Endothelial cell of umbilical vein (primary cell): ENCODE measurements at regions of chr5 and their contacts with region 1.

Region 1: DNA sequence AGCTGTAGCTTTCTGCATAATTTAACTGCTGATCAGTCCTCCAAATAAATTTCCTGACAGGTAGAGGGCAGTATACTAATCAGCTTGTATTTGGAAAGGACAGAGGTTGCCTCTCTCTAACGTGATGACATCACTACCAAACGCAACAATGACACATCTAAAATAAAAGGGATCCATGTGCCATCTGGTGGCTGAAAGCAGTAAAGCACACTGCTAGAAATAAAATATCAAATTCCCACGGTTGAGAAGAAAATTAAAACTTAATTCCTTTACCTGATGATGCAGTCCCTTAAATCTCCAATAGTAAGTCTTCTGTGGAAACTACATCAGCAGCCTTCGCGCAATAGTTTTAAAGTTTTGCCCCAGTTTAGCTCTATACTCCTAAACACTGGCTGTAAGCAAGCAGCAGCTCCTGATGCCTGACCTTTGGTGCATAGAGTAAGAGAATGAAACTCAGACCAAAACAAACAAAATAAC is 54.5 kb downstream of the DIAPH1 start:
- DNase-seq: peak; percentile 94
- H3K4me3 ChIP-seq: no peak overlapping the region
- H3K27ac ChIP-seq: peak overlapping the region; percentile 76
- H3K4me1 ChIP-seq: peaks cover 21% of the 10 kb centered on the region
- H3K27me3 ChIP-seq: no peaks in the 10 kb centered on the region
- CTCF ChIP-seq: peak; percentile 68 to 93
- POLR2A ChIP-seq: no peak

Region 2: DNA sequence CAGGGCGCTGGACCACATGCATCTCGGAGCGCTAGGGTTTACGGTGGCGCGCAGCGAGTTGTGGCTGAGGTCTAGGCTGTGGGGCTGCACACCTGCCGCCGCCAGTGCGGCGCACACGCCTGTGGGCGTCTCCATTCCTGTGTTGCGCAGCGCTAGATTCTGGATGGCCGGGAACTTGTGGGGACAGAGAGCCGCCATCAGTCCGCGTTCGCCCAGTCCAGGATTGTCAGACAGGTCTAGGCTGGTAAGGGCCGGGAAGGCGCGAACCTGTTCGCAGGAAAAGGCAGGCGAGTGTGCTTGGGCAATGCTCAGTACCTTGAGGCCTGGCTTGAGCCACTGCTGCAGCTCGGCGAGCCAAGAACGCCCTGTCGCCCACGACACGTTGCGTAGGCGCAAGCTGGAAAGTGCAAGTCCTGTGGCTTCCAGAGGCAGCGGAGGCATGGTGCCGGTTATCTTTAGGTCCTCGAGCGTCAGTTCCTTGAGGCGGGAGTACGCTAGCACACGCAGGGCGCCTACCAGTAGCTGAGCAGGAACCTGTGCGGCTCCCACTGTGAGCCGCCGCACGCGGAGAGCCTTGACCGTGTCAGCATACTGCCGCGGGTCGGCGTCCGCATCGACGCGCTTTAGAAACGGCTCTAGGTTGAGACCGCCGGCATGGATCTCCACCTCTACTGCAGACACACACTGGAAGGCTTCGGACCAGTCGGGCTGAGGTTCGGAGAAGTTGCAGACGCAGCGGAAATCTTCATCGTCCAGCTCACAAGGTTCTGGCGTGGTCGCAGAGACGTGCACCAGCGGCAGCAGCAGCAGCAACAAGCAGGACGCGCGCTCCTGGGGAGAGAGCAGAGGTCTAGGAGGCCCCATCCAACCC is 931.9 kb before region 1 on chr5:
- CTCF ChIA-PET with region 1: no interaction called
- POLR2A ChIA-PET with region 1: no interaction called
- dilution Hi-C with region 1: no loop called
- intact Hi-C with region 1: no loop called
- DNase-seq: peak; percentile 67
- H3K4me3 ChIP-seq: peak overlapping the region; percentile 28 to 57 (median 47)
- H3K27ac ChIP-seq: no peak overlapping the region
- H3K4me1 ChIP-seq: peaks cover 15% of the 10 kb centered on the region
- H3K27me3 ChIP-seq: peaks cover 0 to 3% of the 10 kb centered on the region in 2 experiments
- CTCF ChIP-seq: no peak
- POLR2A ChIP-seq: no peak

Region 3: DNA sequence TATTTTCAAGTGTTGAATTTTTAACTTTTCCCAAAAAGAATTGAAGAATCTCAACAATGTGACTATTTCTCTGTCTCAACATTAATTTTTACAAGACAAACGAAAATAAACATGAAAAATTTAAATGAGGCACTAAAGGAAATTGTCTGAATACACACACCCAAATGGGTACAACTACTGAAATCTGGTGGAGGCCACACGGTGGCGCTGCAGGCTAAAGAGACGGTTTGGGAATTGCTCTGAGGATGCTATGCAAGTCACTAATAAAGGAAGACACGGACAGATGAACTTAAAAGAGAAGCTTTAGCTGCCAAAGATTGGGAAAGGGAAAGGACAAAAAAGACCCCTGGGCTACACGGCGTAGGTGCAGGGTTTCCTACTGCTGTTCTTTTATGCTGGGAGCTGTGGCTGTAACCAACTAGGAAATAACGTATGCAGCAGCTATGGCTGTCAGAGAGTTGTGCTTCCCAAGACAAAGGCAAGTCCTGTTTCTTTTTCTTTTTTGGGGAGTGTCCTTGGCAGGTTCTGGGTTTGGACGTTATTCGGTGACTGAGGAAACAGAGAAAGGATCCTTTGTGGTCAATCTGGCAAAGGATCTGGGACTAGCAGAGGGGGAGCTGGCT is 372.0 kb before region 1 on chr5 and contains the start of gene PCDHB10:
- CTCF ChIA-PET with region 1: interaction called, 11 read pairs
- POLR2A ChIA-PET with region 1: no interaction called
- dilution Hi-C with region 1: no loop called
- intact Hi-C with region 1: no loop called
- DNase-seq: peak; percentile 43
- H3K4me3 ChIP-seq: no peak within 1 kb of the TSS
- H3K27ac ChIP-seq: no peak within 1 kb of the TSS
- H3K4me1 ChIP-seq: no peaks in the 10 kb centered on the region
- H3K27me3 ChIP-seq: no peaks in the 10 kb centered on the region
- CTCF ChIP-seq: peak; percentile 31 to 32
- POLR2A ChIP-seq: no peak
- total RNA-seq, gene PCDHB10: 0.62 and 0.81 TPM in 2 replicates

Region 4: GRCh38 chr5:141320225-141321169 is 243.8 kb before region 1 on chr5 and contains the start of gene TAF7:
- CTCF ChIA-PET with region 1: interaction called, 18 read pairs
- POLR2A ChIA-PET with region 1: interaction called, 4 read pairs
- dilution Hi-C with region 1: no loop called
- intact Hi-C with region 1: loop called (anchors 1 kb)
- DNase-seq: peak; percentile 91
- H3K4me3 ChIP-seq: peak within 1 kb of the TSS; percentile 56 to 91 (median 87)
- H3K27ac ChIP-seq: peak within 1 kb of the TSS; percentile 91
- H3K4me1 ChIP-seq: no peaks in the 10 kb centered on the region
- H3K27me3 ChIP-seq: no peaks in the 10 kb centered on the region
- CTCF ChIP-seq: peak; percentile 78 to 88
- POLR2A ChIP-seq: peak; percentile 94
- total RNA-seq, gene TAF7: 55.0 and 62.0 TPM in 2 replicates

Region 5: DNA sequence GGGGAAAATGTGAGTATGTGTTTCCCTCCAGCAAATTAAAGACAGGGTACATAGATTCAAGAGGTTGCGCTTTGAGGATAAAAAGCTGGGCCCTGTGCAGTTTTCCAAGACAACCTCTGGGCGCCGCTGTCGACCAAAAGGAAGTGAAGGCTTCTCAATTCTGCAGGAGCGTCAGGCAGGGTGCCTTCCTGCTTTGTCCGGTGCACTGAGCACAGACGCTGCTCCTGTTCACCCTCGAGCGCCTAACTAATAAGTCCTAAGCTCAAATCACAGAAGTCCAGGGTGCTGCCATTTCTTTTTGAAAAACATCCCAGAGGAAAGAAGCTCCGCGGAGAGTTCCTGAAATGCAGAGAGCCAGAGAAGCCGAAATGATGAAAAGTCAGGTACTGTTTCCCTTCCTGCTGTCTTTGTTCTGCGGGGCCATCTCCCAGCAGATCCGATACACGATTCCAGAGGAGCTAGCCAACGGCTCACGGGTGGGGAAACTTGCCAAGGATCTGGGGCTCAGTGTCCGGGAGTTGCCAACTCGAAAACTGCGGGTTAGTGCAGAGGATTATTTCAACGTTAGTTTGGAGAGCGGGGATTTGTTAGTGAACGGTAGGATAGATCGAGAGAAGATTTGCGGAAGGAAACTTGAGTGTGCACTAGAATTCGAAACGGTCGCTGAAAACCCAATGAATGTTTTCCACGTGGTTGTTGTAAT is 214.2 kb before region 1 on chr5 and contains the start of gene PCDHGB1:
- CTCF ChIA-PET with region 1: interaction called, 25 read pairs
- POLR2A ChIA-PET with region 1: no interaction called
- dilution Hi-C with region 1: no loop called
- intact Hi-C with region 1: loop called (anchors 5 kb)
- DNase-seq: no peak
- H3K4me3 ChIP-seq: no peak within 1 kb of the TSS
- H3K27ac ChIP-seq: no peak within 1 kb of the TSS
- H3K4me1 ChIP-seq: no peaks in the 10 kb centered on the region
- H3K27me3 ChIP-seq: peaks cover 25 to 48% of the 10 kb centered on the region in 2 experiments
- CTCF ChIP-seq: peak; percentile 41 to 44
- POLR2A ChIP-seq: no peak
- total RNA-seq, gene PCDHGB1: 0.58 and 0.62 TPM in 2 replicates

Region 6: GRCh38 chr5:141402553-141403260 is 161.5 kb before region 1 on chr5 and contains the start of gene PCDHGA9:
- CTCF ChIA-PET with region 1: interaction called, 58 read pairs
- POLR2A ChIA-PET with region 1: interaction called, 3 read pairs
- dilution Hi-C with region 1: no loop called
- intact Hi-C with region 1: no loop called
- DNase-seq: no peak
- H3K4me3 ChIP-seq: peak within 1 kb of the TSS in 2 of 3 experiments; percentile 9 to 28
- H3K27ac ChIP-seq: no peak within 1 kb of the TSS
- H3K4me1 ChIP-seq: peaks cover 2% of the 10 kb centered on the region
- H3K27me3 ChIP-seq: peaks cover 47 to 68% of the 10 kb centered on the region in 2 experiments
- CTCF ChIP-seq: peak; percentile 37 to 57
- POLR2A ChIP-seq: no peak
- total RNA-seq, gene PCDHGA9: 3.5 and 3.9 TPM in 2 replicates

Region 7: DNA sequence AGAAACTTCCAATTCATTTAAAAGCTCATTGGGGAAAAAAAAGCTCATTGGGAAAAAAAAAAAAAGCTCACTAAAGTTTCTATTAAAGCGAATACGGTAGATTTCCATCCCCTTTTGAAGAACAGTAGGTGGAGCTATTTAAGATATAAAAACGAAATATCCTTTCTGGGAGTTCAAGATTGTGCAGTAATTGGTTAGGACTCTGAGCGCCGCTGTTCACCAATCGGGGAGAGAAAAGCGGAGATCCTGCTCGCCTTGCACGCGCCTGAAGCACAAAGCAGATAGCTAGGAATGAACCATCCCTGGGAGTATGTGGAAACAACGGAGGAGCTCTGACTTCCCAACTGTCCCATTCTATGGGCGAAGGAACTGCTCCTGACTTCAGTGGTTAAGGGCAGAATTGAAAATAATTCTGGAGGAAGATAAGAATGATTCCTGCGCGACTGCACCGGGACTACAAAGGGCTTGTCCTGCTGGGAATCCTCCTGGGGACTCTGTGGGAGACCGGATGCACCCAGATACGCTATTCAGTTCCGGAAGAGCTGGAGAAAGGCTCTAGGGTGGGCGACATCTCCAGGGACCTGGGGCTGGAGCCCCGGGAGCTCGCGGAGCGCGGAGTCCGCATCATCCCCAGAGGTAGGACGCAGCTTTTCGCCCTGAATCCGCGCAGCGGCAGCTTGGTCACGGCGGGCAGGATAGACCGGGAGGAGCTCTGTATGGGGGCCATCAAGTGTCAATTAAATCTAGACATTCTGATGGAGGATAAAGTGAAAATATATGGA is 133.7 kb before region 1 on chr5 and contains the start of gene PCDHGA12:
- CTCF ChIA-PET with region 1: interaction called, 235 read pairs
- POLR2A ChIA-PET with region 1: interaction called, 3 read pairs
- dilution Hi-C with region 1: no loop called
- intact Hi-C with region 1: no loop called
- DNase-seq: peak; percentile 87
- H3K4me3 ChIP-seq: peak within 1 kb of the TSS; percentile 30 to 67 (median 40)
- H3K27ac ChIP-seq: peak within 1 kb of the TSS; percentile 10
- H3K4me1 ChIP-seq: peaks cover 17% of the 10 kb centered on the region
- H3K27me3 ChIP-seq: peaks cover 25 to 48% of the 10 kb centered on the region in 2 experiments
- CTCF ChIP-seq: peak; percentile 45 to 69
- POLR2A ChIP-seq: no peak
- total RNA-seq, gene PCDHGA12: 7.6 and 9.9 TPM in 2 replicates

Region 8: GRCh38 chr5:141524604-141525597 is 39.4 kb before region 1 on chr5:
- CTCF ChIA-PET with region 1: interaction called, 56 read pairs
- POLR2A ChIA-PET with region 1: no interaction called
- dilution Hi-C with region 1: no loop called
- intact Hi-C with region 1: loop called (anchors 1 kb)
- DNase-seq: peak; percentile 96
- H3K4me3 ChIP-seq: no peak overlapping the region
- H3K27ac ChIP-seq: peak overlapping the region; percentile 22
- H3K4me1 ChIP-seq: peaks cover 29% of the 10 kb centered on the region
- H3K27me3 ChIP-seq: no peaks in the 10 kb centered on the region
- CTCF ChIP-seq: peak; percentile 99 to 100
- POLR2A ChIP-seq: no peak